Activated CD8-positive, alpha-beta T cell treated with anti-CD3 and anti-CD28 coated beads, Interleukin-2, amount 10 ng/mL, durations not matched to agents 7 days and 5 days (primary cell): ENCODE measurements at regions of chr7 and their contacts with region 1.

Region 1: GRCh38 chr7:41940760-41941343 is 238.0 kb upstream of the INHBA start:
- DNase-seq: peak; percentile 65
- ATAC-seq: peak; percentile 86
- H3K4me3 Mint-ChIP-seq: no peak overlapping the region
- H3K27ac Mint-ChIP-seq: no peak overlapping the region
- H3K4me1 Mint-ChIP-seq: peaks cover 10% of the 10 kb centered on the region
- H3K27me3 Mint-ChIP-seq: peaks cover 30% of the 10 kb centered on the region

Region 2: DNA sequence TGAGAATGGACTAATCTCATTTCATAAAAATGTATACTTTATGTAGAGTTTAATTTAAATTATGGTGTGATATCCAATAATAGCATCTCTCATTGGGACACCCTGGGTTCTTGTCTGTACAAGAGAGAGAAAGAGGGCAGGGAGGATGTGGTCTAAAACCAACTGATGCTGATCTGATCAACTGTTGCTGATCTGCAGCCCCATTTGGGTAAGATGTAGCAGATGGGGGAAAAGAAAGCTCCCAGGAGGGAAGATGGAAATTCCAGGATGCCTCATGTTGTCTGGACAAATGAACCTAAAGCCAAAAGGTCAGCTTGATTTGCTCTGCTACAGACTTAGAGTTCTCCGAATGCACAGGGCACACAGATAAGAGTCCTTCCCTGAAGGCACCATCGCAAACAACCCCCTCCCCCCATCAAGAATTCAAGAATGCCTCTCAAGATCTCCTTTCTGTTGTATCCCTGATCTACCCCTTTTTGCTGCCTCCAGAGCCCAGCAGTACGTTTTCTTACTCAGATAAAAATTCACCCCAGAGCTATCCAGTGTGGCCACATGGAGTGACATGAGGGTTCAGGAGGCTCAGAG is 66.6 kb before region 1 on chr7:
- CTCF ChIA-PET with region 1: interaction called, 10 read pairs
- POLR2A ChIA-PET with region 1: no interaction called
- DNase-seq: peak; percentile 39
- ATAC-seq: peak; percentile 70
- H3K4me3 Mint-ChIP-seq: no peak overlapping the region
- H3K27ac Mint-ChIP-seq: peak overlapping the region; percentile 63
- H3K4me1 Mint-ChIP-seq: peaks cover 33% of the 10 kb centered on the region
- H3K27me3 Mint-ChIP-seq: peaks cover 9% of the 10 kb centered on the region

Region 3: GRCh38 chr7:41881331-41882130 is 59.3 kb before region 1 on chr7:
- CTCF ChIA-PET with region 1: interaction called, 13 read pairs
- POLR2A ChIA-PET with region 1: no interaction called
- DNase-seq: peak; percentile 89
- ATAC-seq: peak; percentile 97
- H3K4me3 Mint-ChIP-seq: peak overlapping the region; percentile 62
- H3K27ac Mint-ChIP-seq: peak overlapping the region; percentile 99
- H3K4me1 Mint-ChIP-seq: peaks cover 41% of the 10 kb centered on the region
- H3K27me3 Mint-ChIP-seq: no peaks in the 10 kb centered on the region

Region 4: GRCh38 chr7:41955893-41956675 is 15.2 kb after region 1 on chr7:
- CTCF ChIA-PET with region 1: interaction called, 11 read pairs
- POLR2A ChIA-PET with region 1: no interaction called
- DNase-seq: no peak
- ATAC-seq: no peak
- H3K4me3 Mint-ChIP-seq: no peak overlapping the region
- H3K27ac Mint-ChIP-seq: no peak overlapping the region
- H3K4me1 Mint-ChIP-seq: no peaks in the 10 kb centered on the region
- H3K27me3 Mint-ChIP-seq: peaks cover 8% of the 10 kb centered on the region

Region 5: DNA sequence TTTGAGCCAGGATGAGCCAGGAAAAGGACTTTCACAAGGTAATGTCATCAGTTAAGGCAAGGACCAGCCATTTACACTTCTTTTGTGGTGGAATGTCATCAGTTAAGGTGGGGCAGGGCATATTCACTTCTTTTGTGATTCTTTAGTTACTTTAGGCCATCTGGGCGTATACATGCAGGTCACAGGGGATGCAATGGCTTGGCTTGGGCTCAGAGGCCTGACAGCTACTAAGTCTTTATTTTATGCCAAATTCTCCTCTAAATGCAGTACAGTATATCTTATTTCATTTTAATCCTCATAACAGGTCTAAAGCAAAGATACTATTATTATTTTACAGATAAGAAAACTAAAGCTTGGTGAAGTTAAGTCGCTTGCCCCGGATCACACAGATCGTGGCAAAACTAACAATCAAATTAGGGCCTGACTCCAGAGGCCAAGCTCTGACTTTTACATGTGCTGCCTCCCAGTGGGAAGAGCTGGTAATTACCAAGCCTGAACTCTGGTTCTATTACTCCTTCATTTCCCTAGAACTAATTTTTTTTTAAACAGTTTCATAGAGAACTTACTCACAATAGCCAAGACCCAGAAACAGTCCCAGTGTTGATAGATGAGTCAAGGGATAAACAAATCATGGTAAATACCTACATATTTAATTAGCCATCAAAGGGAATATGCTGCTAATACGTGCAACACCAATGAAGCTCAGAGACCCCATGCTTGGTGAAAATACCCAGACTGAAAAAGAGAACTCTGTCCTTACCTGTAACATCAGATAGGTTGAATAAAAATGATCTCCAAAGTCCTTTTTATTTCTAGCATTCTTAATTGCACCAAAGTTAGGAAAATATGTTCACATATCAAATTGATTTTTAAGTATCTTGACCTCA is 935.6 kb after region 1 on chr7:
- CTCF ChIA-PET with region 1: interaction called, 14 read pairs
- POLR2A ChIA-PET with region 1: no interaction called
- DNase-seq: peak; percentile 61
- ATAC-seq: peak; percentile 65
- H3K4me3 Mint-ChIP-seq: no peak overlapping the region
- H3K27ac Mint-ChIP-seq: no peak overlapping the region
- H3K4me1 Mint-ChIP-seq: no peaks in the 10 kb centered on the region
- H3K27me3 Mint-ChIP-seq: no peaks in the 10 kb centered on the region